ENCODE measurements at regions of chr1 and their contacts with region 1.

Region 1: GRCh38 chr1:160046494-160047110 is 14.8 kb upstream of the PIGM start:
- DNase-seq: peak; percentile 46
- H3K4me3 Mint-ChIP-seq: peak overlapping the region; percentile 60
- H3K27ac Mint-ChIP-seq: peak overlapping the region; percentile 34
- H3K4me1 Mint-ChIP-seq: peaks cover 14% of the 10 kb centered on the region
- H3K27me3 Mint-ChIP-seq: peaks cover 33% of the 10 kb centered on the region

Region 2: DNA sequence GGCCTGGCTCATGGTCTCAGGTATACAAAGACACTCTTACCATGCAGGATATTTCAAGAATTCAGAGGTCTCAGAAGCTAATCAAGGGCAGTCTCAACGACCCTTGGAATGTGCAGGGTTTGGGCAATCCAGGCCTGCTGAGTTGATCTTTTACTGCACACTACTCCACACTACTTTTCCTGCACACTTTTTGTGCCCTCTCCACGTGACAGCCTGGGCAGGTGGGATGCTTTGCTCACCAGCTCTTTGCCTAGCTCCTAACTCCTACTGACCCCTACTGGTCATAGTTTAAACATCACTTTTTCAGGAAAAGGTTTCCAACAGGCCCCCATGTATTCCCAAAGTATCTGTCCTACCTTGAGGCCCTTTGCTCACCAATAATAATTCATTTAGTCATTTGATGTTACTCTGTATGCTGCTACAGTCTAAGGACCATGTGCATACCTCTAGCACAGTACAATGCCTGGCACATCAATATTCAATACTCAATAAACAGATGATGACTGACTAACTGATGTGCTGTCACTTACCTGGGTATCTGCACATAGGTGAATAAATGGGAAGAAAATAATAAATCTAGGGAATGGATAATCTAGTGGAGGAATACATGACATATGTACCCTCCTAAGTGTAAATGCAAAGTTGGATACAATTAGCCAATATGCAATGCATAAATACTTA is 256.2 kb before region 1 on chr1:
- CTCF ChIA-PET with region 1: no interaction called
- DNase-seq: no peak
- H3K4me3 Mint-ChIP-seq: no peak overlapping the region
- H3K27ac Mint-ChIP-seq: no peak overlapping the region
- H3K4me1 Mint-ChIP-seq: peaks cover 4% of the 10 kb centered on the region
- H3K27me3 Mint-ChIP-seq: peaks cover 25% of the 10 kb centered on the region

Region 3: GRCh38 chr1:160031365-160032164 is 15.0 kb before region 1 on chr1 and contains the start of gene PIGM:
- CTCF ChIA-PET with region 1: interaction called, 16 read pairs
- DNase-seq: peak; percentile 98
- H3K4me3 Mint-ChIP-seq: peak within 1 kb of the TSS; percentile 89
- H3K27ac Mint-ChIP-seq: peak within 1 kb of the TSS; percentile 86
- H3K4me1 Mint-ChIP-seq: peaks cover 36% of the 10 kb centered on the region
- H3K27me3 Mint-ChIP-seq: peaks cover 15% of the 10 kb centered on the region

Region 4: GRCh38 chr1:160058087-160058486 is 11.5 kb after region 1 on chr1:
- CTCF ChIA-PET with region 1: interaction called, 52 read pairs
- DNase-seq: no peak
- H3K4me3 Mint-ChIP-seq: no peak overlapping the region
- H3K27ac Mint-ChIP-seq: no peak overlapping the region
- H3K4me1 Mint-ChIP-seq: no peaks in the 10 kb centered on the region
- H3K27me3 Mint-ChIP-seq: peaks cover 76% of the 10 kb centered on the region

Region 5: GRCh38 chr1:160070243-160071163 is 23.9 kb after region 1 on chr1:
- CTCF ChIA-PET with region 1: interaction called, 210 read pairs
- DNase-seq: peak; percentile 76
- H3K4me3 Mint-ChIP-seq: peak overlapping the region; percentile 74
- H3K27ac Mint-ChIP-seq: no peak overlapping the region
- H3K4me1 Mint-ChIP-seq: peaks cover 13% of the 10 kb centered on the region
- H3K27me3 Mint-ChIP-seq: peaks cover 85% of the 10 kb centered on the region

Region 6: DNA sequence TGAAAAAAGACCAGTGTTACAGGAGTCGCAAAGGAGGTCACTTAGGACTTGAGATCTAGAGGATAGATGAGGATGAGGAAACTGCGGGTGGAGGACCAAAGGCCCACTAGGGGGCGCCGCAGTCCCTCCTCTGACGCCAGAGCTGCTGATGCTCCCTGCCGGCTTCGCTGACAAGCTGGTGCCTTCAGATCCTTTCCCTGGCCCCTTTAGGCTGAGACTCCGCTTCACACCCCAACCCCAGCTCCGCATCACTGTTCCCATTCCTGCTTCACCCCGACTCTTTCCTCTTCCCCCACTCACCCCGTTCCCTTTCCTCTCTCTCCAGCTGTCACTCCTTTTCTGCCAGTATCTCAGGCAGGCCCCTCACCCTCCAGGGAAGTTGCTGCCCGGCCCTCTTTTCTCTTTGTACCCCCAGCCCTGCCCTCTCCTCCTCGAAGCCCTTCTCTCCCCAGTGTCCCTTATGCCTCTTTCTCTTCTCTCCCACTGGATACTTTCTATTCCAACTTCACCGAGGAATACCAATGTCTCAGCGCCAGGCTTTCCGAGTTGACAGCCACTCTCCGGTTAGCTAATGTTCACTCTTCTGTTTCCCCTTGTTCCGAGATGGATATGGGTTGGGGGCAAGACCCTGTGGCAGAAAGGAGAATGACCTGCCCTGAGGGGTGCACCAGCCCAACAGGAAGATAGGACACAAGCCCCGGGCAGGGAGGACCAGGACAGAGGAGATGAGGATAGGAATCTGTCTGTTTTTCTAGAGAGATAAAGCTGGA is 39.3 kb after region 1 on chr1:
- CTCF ChIA-PET with region 1: interaction called, 210 read pairs
- DNase-seq: peak; percentile 85
- H3K4me3 Mint-ChIP-seq: no peak overlapping the region
- H3K27ac Mint-ChIP-seq: no peak overlapping the region
- H3K4me1 Mint-ChIP-seq: peaks cover 12% of the 10 kb centered on the region
- H3K27me3 Mint-ChIP-seq: peaks cover 32% of the 10 kb centered on the region

Region 7: DNA sequence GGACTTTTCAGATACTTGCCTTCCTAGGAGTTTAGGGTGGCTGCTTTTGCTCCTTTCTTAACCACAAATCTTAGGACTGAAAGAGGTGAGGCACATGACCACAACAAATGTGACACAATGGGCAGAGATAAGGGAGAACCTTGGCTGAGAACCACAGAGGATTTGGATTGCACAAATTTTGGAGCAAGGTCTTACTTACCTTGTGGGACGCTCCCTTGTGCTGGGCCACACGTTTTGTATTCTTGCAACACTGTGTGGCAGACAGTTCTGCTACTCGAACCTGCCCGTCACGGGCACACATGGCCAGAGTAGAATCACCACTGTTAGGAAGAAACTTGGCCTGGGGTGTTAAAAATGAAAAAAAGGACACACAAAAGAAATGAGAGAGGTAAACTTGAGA is 191.8 kb after region 1 on chr1:
- CTCF ChIA-PET with region 1: no interaction called
- DNase-seq: no peak
- H3K4me3 Mint-ChIP-seq: no peak overlapping the region
- H3K27ac Mint-ChIP-seq: no peak overlapping the region
- H3K4me1 Mint-ChIP-seq: no peaks in the 10 kb centered on the region
- H3K27me3 Mint-ChIP-seq: no peaks in the 10 kb centered on the region